CD8-positive, alpha-beta T cell (primary cell): ENCODE measurements at regions of chr16 and their contacts with region 1.

Region 1: DNA sequence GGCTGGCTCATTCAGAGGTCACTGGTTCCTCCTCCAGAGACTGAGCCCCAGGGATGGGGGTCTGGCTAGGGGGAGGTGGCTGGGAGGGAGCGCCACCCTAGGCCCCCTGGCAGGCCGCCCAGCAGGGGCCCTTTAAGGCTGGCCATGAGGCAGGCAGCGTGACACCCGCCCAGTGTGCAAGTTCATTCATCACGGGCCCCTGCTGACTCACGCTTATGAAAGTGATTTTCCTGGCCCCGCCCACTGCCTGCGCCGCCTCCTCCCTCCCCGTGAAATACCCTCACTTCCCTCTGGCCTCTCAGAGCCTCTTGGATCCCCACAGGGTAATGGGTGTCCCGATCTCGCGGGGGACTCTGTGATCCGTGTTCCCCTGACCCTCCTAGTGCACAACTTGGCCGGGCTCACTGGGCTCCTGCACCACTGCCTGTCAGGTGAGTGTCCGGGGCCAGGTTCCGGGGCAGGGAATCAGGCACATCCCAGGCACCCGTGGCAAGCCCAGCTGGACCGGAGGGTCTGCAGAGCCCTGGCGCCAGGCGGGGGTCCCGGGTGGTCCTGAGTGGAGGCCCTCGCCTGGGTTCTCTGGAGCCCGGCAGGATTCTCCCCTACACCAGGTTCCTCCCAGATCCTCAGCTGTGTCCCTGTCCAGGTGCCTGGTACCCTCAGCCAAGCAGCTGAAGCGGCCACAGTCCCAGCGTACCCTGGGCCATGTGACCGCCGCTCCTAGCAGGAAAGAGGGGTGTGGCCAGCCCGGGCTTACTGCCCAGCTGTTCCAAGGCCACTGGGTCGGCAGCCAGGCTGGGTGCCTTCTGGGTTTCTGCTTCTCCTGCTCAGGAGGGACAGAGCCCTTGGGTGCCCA is at the start of gene OSGIN1:
- DNase-seq: peak in 7 of 9 experiments; percentile 31 to 62 (median 36)
- ATAC-seq: peak; percentile 57
- H3K4me3 ChIP-seq: no peak within 1 kb of the TSS
- H3K4me3 Mint-ChIP-seq: no peak within 1 kb of the TSS
- H3K27ac ChIP-seq: no peak within 1 kb of the TSS
- H3K27ac Mint-ChIP-seq: no peak within 1 kb of the TSS
- H3K4me1 ChIP-seq: no peaks in the 10 kb centered on the region
- H3K4me1 Mint-ChIP-seq: peaks cover 2% of the 10 kb centered on the region
- H3K27me3 ChIP-seq: peaks cover 0 to 28% of the 10 kb centered on the region in 2 experiments
- H3K27me3 Mint-ChIP-seq: peaks cover 19% of the 10 kb centered on the region
- CTCF ChIP-seq: no peak
- total RNA-seq, gene OSGIN1: 0.84 to 1.0 TPM

Region 2: GRCh38 chr16:84062734-84063640 is 109.8 kb after region 1 on chr16:
- CTCF ChIA-PET with region 1: interaction called, 3 read pairs
- POLR2A ChIA-PET with region 1: no interaction called
- intact Hi-C with region 1: loop called (anchors 1 to 10 kb)
- DNase-seq: peak; percentile 23 to 68 (median 59)
- ATAC-seq: peak; percentile 89
- H3K4me3 ChIP-seq: no peak overlapping the region
- H3K4me3 Mint-ChIP-seq: no peak overlapping the region
- H3K27ac ChIP-seq: no peak overlapping the region
- H3K27ac Mint-ChIP-seq: peak overlapping the region; percentile 67
- H3K4me1 ChIP-seq: no peaks in the 10 kb centered on the region
- H3K4me1 Mint-ChIP-seq: no peaks in the 10 kb centered on the region
- H3K27me3 ChIP-seq: no peaks in the 10 kb centered on the region
- H3K27me3 Mint-ChIP-seq: no peaks in the 10 kb centered on the region
- CTCF ChIP-seq: peak; percentile 80

Region 3: GRCh38 chr16:84175350-84176081 is 222.3 kb after region 1 on chr16:
- CTCF ChIA-PET with region 1: interaction called, 10 read pairs
- POLR2A ChIA-PET with region 1: no interaction called
- intact Hi-C with region 1: loop called in 1 of 2 experiments (anchors 1 kb)
- DNase-seq: peak in 8 of 9 experiments; percentile 49 to 69 (median 60)
- ATAC-seq: peak; percentile 98
- H3K4me3 ChIP-seq: no peak overlapping the region
- H3K4me3 Mint-ChIP-seq: no peak overlapping the region
- H3K27ac ChIP-seq: no peak overlapping the region
- H3K27ac Mint-ChIP-seq: peak overlapping the region; percentile 27
- H3K4me1 ChIP-seq: no peaks in the 10 kb centered on the region
- H3K4me1 Mint-ChIP-seq: peaks cover 4% of the 10 kb centered on the region
- H3K27me3 ChIP-seq: no peaks in the 10 kb centered on the region
- H3K27me3 Mint-ChIP-seq: peaks cover 2% of the 10 kb centered on the region
- CTCF ChIP-seq: peak; percentile 85